ACHN (cell line): ENCODE measurements at regions of chr6 and their contacts with region 1.

Region 1: DNA sequence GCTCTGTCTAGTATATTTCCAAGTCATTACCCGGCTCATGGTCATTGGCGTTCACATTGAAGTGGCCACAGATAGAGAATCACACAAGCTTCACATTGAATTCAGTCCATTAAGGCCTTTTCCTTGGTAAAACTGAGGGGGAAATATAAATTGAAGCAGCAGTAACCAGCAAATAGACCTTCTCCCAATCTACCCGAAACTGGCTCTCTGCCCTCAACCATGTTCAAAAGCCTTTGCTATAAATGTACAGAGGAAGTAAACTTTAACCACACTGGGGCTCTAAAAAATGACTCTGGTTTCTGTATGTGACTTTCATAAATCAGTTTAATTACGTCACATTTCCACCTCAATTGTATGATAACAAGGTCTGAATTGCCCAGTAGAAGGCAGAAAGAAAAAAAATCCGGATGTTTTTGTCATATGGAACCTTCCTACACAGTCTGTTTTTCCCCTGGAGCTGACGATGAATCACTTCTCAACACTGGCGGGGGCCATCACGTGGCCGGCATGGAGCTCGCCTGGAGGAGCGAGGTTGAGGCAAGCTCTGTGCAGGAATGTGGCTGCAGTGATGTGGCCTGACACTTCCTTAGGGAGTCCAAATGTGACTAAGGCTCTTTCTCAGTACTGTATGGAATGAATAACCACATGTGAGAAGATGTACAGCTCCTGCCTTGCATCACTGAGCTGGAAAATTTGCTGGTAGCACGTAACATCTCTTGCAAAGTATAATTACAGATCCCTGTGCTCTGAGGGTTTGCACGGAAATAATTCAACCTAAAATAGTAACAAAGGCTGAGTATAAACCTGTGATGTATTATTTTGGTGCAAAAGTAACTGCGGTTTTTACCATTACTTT is 58.6 kb upstream of the SNX9 start:
- DNase-seq: peak; percentile 99

Region 2: GRCh38 chr6:157669747-157670216 is 94.6 kb before region 1 on chr6:
- in situ Hi-C with region 1: no loop called
- DNase-seq: no peak

Region 3: DNA sequence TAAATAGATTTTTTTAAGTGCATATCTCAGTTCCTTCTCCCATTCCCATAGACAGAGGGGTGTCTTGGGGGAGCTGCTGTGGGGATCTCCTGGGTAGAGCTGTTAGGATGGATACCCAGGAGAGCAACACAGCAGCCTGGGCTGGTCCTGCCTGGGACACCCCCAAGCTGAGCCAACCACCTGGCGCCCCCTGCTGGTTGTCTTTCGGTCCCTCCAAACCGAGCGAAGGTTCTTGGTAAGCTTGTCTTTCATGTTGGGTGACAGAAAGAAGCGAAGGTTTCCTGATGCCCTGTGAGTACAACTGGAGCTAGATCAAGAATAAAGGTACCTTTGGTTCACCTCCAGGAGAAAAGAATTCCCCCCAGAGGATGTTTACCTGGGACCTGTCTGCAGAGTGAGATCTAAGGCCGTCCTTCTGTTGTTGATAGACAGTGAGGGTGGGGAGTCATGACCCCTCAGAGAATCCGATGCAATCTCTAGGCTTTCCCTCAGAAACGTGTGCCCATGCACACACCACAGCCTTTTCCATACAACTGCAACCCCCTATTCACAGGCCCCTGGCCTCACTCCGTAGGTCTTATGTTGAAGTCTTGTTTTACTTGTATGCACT is 109.4 kb after region 1 on chr6:
- in situ Hi-C with region 1: loop called (anchors 10 kb)
- DNase-seq: peak; percentile 64